Activated CD4-positive, alpha-beta memory T cell treated with anti-CD3 and anti-CD28 coated beads, Interleukin-2, amount 10 ng/mL, durations not matched to agents 7 days and 5 days (primary cell): ENCODE measurements at regions of chr3 and their contacts with region 1.

Region 1: GRCh38 chr3:134250717-134251220 is at the start of gene RYK:
- DNase-seq: peak; percentile 73
- H3K4me3 Mint-ChIP-seq: peak within 1 kb of the TSS; percentile 86
- H3K27ac Mint-ChIP-seq: peak within 1 kb of the TSS; percentile 56
- H3K4me1 Mint-ChIP-seq: peaks cover 28% of the 10 kb centered on the region
- H3K27me3 Mint-ChIP-seq: peaks cover 41% of the 10 kb centered on the region
- total RNA-seq, gene RYK: 6.0 to 6.1 TPM

Region 2: GRCh38 chr3:134392336-134392983 is 141.7 kb after region 1 on chr3:
- CTCF ChIA-PET with region 1: no interaction called
- POLR2A ChIA-PET with region 1: no interaction called
- DNase-seq: no peak
- H3K4me3 Mint-ChIP-seq: no peak overlapping the region
- H3K27ac Mint-ChIP-seq: no peak overlapping the region
- H3K4me1 Mint-ChIP-seq: no peaks in the 10 kb centered on the region
- H3K27me3 Mint-ChIP-seq: peaks cover 18% of the 10 kb centered on the region

Region 3: DNA sequence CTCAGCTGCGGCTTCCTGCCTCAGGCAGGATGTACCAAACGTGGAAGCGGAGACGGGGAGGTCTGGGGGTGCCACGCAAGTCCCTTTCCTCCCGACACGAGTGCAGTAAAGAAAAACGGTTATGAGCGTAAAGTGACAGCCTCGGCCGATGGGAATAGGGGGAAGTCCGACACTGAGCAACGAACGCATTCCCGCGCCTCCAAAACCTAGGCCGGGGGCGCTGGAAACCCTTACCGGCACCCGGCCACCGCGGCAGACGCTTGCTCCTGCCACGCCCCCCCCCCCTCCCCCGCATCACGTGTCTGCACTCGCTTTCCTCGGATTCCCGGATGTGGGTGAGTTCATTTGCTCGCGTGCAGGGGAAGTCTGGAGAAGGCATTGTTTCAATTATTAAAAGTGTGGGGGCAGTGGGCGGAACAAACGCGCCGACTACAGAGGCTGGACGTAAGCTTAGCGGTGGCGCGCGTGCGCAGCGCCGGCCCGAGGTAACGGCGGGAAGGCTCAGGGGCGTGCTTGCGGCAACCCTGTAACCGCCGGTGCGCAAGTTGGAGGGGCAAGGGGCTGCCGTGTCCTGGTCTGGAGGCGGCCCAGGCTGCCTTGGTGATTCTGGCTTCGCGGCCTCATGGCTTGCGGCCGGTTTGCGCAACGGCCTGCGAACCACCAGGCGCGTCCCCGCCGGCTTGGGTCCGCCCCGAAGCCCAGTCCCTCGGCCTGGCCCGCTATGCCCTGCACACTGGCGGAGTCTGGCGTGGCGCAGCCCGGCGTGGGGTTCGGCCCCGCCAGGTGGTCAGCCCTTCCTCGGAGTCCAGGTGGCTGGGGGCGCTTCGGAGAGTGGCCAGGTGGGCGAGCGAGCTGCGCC is 235.2 kb after region 1 on chr3 and contains the starts of genes ANAPC13 and CEP63:
- CTCF ChIA-PET with region 1: no interaction called
- POLR2A ChIA-PET with region 1: interaction called, 11 read pairs
- DNase-seq: peak; percentile 94
- H3K4me3 Mint-ChIP-seq: peak within 1 kb of the TSS; percentile 89
- H3K27ac Mint-ChIP-seq: peak within 1 kb of the TSS; percentile 95
- H3K4me1 Mint-ChIP-seq: peaks cover 45% of the 10 kb centered on the region
- H3K27me3 Mint-ChIP-seq: no peaks in the 10 kb centered on the region
- total RNA-seq, gene ANAPC13: 27.3 to 27.4 TPM
- total RNA-seq, gene CEP63: 22.4 to 24.2 TPM